Ovary (tissue), 10 donors: ENCODE measurements at regions of chr3 and their contacts with region 1.

Region 1: GRCh38 chr3:194404365-194405140 is 5.5 kb upstream of the GP5 start:
- DNase-seq: peak in 1 of 5 donors; percentile 39
- H3K4me3 ChIP-seq: no peak overlapping the region
- H3K27ac ChIP-seq: no peak overlapping the region
- H3K4me1 ChIP-seq: no peaks in the 10 kb centered on the region
- H3K27me3 ChIP-seq: no peaks in the 10 kb centered on the region
- CTCF ChIP-seq: peak; percentile 22 to 63 (median 52)
- EP300 ChIP-seq: no peak
- POLR2A ChIP-seq: no peak

Region 2: DNA sequence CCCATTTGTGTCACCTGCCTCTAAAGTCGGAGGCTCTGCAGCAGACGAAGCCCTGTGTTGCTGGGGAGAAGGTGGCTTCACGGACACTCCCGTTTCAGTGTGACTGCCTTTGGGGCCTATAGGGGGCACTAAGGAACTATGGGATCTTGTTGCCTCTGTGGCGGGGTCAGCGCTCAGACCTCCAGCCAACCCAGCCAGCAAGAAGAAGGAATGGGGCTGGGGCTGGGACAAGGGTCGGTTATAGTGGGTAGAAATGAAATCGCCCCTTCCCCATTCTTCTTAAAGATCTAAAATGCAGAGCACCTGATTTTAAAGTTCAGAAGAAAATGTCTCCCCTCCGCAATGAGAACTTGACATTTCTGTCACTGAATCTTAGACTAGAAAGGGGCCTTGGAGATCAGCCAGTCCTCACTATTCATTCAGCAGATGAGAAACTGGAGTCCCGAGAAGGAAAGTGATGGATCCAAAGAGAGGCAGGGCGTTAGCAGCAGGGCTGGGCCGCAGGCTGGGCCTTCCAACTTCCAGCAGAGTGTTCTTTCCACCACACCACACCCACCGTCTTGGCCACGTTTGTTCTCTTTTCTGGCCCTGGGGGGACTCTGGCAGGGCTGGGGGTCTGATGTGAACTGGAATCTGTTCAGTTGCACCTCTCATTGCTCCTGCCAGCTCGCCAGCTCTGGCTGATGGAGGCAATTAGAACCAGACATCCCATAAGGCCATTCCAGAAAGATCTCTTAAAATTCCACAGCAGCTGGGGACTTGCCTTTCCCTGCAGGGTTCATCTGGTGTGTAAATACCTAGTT is 616.2 kb before region 1 on chr3:
- intact Hi-C with region 1: loop called in 1 of 4 experiments (anchors 5 kb)
- DNase-seq: peak; percentile 44 to 63 (median 55)
- H3K4me3 ChIP-seq: no peak overlapping the region
- H3K27ac ChIP-seq: no peak overlapping the region
- H3K4me1 ChIP-seq: no peaks in the 10 kb centered on the region
- H3K27me3 ChIP-seq: no peaks in the 10 kb centered on the region
- CTCF ChIP-seq: peak; percentile 14 to 56 (median 45)
- EP300 ChIP-seq: no peak
- POLR2A ChIP-seq: no peak

Region 3: DNA sequence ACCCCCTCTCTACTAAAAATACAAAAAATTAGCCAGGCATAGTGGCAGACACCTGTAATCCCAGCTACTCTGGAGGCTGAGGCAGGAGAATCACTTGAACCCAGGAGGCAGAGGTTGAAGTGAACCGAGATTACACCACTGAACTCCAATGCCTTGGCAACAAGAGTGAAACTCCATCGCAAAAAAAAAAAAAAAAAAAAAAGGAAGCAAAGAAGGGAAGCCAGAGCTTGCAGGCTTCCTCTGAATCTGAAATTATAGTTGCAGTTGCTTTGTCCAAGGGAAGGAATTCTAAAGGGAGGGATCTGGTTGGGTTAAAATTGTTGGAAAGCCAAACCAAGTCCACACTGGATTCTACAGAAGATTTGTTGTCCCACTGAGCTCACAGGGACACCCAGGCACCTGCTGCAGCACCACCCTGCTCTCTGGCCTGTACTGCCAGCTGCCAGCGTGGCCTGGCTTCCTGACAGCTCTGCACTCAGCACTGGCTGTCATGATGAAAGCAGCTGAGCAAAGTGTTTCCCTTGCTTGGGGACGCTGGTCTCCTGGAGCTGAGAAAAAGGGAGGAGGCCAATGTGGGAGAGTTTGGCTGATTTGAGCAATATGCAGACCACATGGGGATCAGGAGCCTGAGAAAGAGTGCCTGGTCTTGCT is 357.4 kb before region 1 on chr3:
- intact Hi-C with region 1: no loop called
- DNase-seq: no peak
- H3K4me3 ChIP-seq: no peak overlapping the region
- H3K27ac ChIP-seq: no peak overlapping the region
- H3K4me1 ChIP-seq: no peaks in the 10 kb centered on the region
- H3K27me3 ChIP-seq: no peaks in the 10 kb centered on the region
- CTCF ChIP-seq: no peak
- EP300 ChIP-seq: no peak
- POLR2A ChIP-seq: no peak

Region 4: DNA sequence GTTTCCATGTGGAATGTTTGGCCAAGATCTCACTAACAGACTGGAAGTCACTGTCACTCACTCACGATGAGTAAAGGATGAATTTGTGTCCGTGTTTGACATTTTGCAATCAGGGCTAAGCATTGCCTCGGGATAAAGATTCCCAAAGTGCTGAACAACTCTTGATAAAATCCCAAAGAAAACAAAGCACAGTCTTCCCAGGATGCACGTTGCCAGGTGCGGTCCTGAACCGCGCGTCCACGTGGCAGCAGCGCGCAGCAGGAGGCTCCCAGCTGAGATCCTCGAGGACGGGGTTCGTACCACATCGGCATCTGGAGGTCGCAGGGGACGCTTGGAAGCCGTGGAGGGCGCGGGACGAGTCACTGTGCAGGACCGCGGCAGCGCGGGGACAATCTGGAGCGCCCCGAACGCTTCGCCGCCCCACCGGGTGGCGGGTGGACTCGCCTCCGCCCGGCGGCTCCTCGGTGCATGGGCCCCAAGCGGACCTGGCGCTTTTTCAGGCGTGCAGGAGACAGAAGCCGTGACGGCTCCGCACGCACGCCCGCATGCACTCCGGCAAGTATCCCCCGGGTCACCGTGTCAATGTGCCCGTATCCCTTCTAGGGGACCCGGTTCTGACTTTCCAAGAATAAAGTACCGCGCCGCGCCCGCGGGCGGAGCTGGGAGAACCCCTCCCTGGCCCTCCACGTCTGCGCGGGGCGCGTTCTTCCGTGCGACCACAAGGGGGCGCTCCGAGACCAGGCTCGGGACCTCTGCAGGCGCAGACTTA is 71.2 kb before region 1 on chr3:
- intact Hi-C with region 1: loop called in 3 of 4 experiments (anchors 5 to 10 kb)
- DNase-seq: peak; percentile 81 to 93 (median 90)
- H3K4me3 ChIP-seq: peak overlapping the region; percentile 30
- H3K27ac ChIP-seq: no peak overlapping the region
- H3K4me1 ChIP-seq: no peaks in the 10 kb centered on the region
- H3K27me3 ChIP-seq: no peaks in the 10 kb centered on the region
- CTCF ChIP-seq: peak; percentile 94 to 99 (median 96)
- EP300 ChIP-seq: no peak
- POLR2A ChIP-seq: no peak

Region 5: DNA sequence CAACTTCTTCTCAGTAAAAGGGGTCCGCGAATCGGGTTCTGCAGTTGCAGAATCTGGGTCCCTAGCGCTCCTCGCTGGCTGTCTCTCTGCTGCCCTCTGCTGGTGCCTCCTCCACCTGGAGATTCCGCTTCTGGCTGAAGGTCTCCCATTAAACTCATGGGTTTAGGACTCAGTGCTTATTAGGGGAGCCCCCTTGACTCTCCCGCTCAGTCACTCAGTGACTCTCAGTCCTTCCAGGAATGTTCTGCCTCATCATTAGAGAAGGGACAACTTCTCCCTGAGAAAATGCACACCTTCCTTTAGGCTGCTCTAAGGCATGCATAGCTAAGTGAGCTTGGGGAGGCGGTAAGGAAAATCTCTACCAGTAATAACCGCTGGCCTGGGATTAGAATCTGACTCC is 60.5 kb before region 1 on chr3:
- intact Hi-C with region 1: loop called in 3 of 4 experiments (anchors 5 to 10 kb)
- DNase-seq: peak; percentile 72 to 87 (median 83)
- H3K4me3 ChIP-seq: no peak overlapping the region
- H3K27ac ChIP-seq: no peak overlapping the region
- H3K4me1 ChIP-seq: no peaks in the 10 kb centered on the region
- H3K27me3 ChIP-seq: no peaks in the 10 kb centered on the region
- CTCF ChIP-seq: peak; percentile 54 to 79 (median 72)
- EP300 ChIP-seq: no peak
- POLR2A ChIP-seq: no peak

Region 6: DNA sequence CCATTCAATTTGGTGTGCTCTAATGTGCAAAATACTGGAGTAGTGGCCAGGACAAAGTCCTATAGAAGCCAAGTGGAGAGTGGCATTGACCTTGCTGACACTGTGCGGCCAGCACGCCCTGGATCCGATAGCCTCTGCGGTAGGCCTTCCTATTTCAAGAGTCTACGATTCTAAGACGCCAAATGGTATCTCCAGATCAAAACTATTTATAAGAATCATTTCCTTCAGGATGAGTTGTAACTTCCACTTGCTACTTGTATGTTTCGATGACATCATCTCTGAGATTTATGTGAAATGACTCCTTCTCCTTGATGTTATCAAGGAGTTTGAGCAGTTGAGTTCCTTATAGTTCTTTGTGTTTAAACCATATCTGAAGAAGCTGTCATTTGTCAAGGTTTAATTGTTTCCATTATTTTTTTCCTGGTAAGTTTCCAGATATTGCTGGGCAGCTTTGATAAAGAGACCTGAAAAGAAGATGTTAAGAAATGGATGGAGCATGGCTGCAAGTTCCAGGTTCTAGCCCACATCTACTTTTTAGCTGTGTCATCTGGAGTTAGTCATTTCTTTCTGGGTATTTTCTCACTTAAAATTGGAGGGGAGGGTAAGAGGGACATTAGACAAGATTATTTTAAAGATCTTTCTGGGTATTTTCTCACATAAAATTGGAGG is 156.9 kb after region 1 on chr3:
- intact Hi-C with region 1: no loop called
- DNase-seq: no peak
- H3K4me3 ChIP-seq: no peak overlapping the region
- H3K27ac ChIP-seq: no peak overlapping the region
- H3K4me1 ChIP-seq: peaks cover 9% of the 10 kb centered on the region
- H3K27me3 ChIP-seq: no peaks in the 10 kb centered on the region
- CTCF ChIP-seq: no peak
- EP300 ChIP-seq: no peak
- POLR2A ChIP-seq: no peak